OCI-LY7 (cell line): ENCODE measurements at regions of chr7 and their contacts with region 1.

Region 1: GRCh38 chr7:106056513-106057203 is 55.5 kb downstream of the SYPL1 start:
- DNase-seq: peak; percentile 93
- H3K4me3 ChIP-seq: peak overlapping the region; percentile 52
- H3K27ac ChIP-seq: peak overlapping the region; percentile 98
- H3K4me1 ChIP-seq: peaks cover 87% of the 10 kb centered on the region
- CTCF ChIP-seq: peak; percentile 96

Region 2: GRCh38 chr7:104943502-104944343 is 1112.9 kb before region 1 on chr7:
- CTCF ChIA-PET with region 1: no interaction called
- POLR2A ChIA-PET with region 1: no interaction called
- intact Hi-C with region 1: loop called (anchors 5 kb)
- DNase-seq: peak; percentile 88
- H3K4me3 ChIP-seq: peak overlapping the region; percentile 65
- H3K27ac ChIP-seq: peak overlapping the region; percentile 96
- H3K4me1 ChIP-seq: peaks cover 86% of the 10 kb centered on the region
- CTCF ChIP-seq: no peak

Region 3: DNA sequence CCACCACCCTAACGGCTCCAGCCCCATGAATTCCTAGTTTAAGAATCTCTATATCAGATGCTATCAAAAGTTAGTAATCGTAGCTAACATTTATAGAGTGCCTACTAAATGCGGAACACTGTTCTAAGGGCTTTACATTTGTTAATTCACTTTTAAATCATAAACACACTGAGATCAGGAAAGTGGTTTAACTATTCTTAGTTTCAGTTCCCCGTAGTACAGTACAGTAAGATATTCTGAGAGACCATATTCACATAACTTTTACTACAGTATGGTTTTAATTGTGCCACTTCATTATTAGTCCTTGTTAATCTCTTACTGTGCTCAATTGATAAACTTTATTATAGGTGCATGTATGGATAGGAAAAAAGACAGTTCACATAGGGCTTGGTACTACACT is 33.0 kb after region 1 on chr7:
- CTCF ChIA-PET with region 1: no interaction called
- POLR2A ChIA-PET with region 1: interaction called, 8 read pairs
- intact Hi-C with region 1: loop called (anchors 1 kb)
- DNase-seq: peak; percentile 66
- H3K4me3 ChIP-seq: peak overlapping the region; percentile 38
- H3K27ac ChIP-seq: peak overlapping the region; percentile 87
- H3K4me1 ChIP-seq: peaks cover 76% of the 10 kb centered on the region
- CTCF ChIP-seq: no peak

Region 4: DNA sequence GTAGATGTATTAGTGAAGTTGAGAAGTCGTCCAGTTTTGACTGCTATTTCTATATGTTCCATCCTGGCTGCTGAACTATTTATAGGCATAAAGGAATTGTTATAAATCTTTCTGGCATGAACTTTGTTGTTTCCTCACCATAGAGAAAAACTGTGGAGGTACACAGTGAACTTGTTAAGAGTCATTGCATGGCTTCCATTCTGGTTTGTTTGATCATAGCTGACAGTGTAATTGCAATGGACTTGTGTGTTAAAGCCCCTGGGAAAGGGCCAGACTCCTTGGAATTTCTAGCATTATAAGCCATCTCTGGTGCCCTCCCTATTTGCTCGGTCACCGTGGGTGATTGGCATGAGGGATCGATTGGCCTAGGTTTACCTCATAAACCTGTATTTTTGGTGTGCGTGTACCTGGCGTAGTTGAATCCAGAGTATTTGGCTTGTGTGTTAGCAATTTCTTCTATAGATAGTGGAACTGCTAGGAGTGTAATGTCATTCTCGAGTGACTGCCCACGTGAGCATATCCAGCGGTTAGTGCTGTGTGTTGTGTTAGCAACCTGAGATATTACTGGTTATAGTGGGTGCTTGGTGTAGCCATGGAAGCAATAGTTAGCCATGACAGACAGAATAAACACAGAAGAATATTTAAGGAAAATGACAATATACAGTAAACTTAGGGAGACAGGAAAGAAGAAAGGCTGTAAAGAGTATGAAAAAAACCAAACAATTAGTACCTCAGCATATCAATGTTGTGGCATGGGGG is 61.3 kb after region 1 on chr7:
- CTCF ChIA-PET with region 1: no interaction called
- POLR2A ChIA-PET with region 1: interaction called, 66 read pairs
- intact Hi-C with region 1: no loop called
- DNase-seq: no peak
- H3K4me3 ChIP-seq: peak overlapping the region; percentile 28
- H3K27ac ChIP-seq: peak overlapping the region; percentile 83
- H3K4me1 ChIP-seq: peaks cover 89% of the 10 kb centered on the region
- CTCF ChIP-seq: no peak

Region 5: DNA sequence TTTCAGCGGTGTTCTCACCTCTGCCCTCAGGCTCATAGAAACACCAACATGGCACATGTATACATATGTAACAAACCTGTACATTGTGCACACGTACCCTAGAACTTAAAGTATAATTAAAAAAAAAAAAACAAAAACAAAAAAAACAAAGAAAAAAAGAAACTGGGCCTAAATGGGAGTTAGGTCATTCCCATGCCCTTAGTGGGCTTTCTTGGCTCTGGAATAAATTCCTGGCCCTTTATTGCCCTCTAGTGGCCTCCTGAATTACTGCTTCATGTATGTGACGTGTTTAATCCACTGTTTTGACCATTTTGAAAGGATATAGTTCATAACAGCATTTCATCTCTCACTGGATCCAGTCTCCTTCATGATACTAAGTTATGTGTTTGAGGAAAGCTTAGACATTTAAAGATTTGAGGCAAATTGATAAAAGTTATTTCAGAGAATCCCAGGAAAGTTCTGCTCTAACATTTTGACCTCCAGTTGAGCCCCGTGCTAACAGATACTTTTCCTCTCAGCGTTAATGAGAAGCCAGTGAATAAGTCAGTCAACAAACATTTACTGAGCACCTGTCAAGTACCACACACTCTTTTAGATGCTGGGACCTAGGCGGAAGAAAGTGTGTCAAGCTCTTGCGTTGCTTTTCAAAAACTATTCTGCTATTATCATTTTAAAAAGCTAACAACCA is 110.1 kb after region 1 on chr7:
- CTCF ChIA-PET with region 1: no interaction called
- POLR2A ChIA-PET with region 1: interaction called, 6 read pairs
- intact Hi-C with region 1: loop called (anchors 1 kb)
- DNase-seq: peak; percentile 79
- H3K4me3 ChIP-seq: no peak overlapping the region
- H3K27ac ChIP-seq: no peak overlapping the region
- H3K4me1 ChIP-seq: peaks cover 14% of the 10 kb centered on the region
- CTCF ChIP-seq: peak; percentile 95

Region 6: DNA sequence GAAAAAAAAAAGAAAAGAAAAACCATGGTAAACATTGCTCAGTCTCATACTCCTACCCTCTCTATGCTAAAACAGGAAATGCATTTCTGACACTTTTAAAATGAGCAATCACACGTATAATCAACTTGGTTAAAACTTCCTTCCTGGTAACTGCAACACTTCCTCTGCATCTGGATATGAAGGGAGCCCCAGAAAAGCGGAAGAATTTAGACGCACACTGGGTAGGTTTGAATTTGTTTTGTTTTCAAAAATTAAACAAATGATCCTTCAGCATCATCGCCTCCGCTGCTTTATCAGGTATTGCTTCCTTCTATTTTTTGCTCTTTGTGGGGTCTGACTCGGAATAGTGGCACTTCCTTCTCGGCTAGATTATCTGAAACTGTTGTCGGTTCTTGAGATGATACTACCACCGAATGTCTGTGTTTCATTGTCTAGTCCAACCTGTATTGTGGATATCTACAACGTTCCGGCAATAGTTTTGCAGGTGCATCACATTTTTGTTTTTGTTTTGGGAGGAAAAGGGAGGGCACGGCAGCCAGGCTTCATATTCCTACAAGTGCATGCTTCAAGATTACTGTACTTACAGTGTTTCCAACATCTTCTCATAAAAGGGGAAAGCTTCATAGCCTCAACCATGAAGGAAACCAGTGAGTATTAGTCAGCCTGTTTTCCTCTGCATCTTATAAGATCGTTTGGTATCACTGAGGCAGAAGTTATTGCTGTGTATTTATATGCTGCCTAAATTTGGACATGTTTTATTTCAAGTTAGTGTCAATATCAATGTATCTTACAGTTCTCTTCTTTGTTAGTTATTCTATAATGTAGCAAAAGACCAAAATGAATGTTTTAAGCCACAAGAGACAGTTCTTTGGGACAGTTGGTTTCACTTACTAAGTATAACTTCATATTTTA is 808.7 kb after region 1 on chr7 and contains the start of gene PIK3CG:
- CTCF ChIA-PET with region 1: no interaction called
- POLR2A ChIA-PET with region 1: no interaction called
- intact Hi-C with region 1: loop called (anchors 10 kb)
- DNase-seq: peak; percentile 87
- H3K4me3 ChIP-seq: peak within 1 kb of the TSS; percentile 82
- H3K27ac ChIP-seq: peak within 1 kb of the TSS; percentile 86
- H3K4me1 ChIP-seq: peaks cover 44% of the 10 kb centered on the region
- CTCF ChIP-seq: no peak
- total RNA-seq, gene PIK3CG: 21.1 and 22.8 TPM in 2 replicates